ENCODE measurements at regions of chr11 and their contacts with region 1.

Region 1: GRCh38 chr11:66592457-66593302 is at the starts of genes CCDC87 and CCS:
- DNase-seq: peak; percentile 93
- ATAC-seq: peak; percentile 89
- H3K4me3 ChIP-seq: peak within 1 kb of the TSS; percentile 71 to 94 (median 76)
- H3K27ac ChIP-seq: peak within 1 kb of the TSS; percentile 78
- H3K4me1 ChIP-seq: peaks cover 72% of the 10 kb centered on the region
- H3K27me3 ChIP-seq: no peaks in the 10 kb centered on the region; a peak in 1 of 5 replicates
- CTCF ChIP-seq: peak; percentile 85
- EP300 ChIP-seq: no peak
- POLR2A ChIP-seq: peak; percentile 89 to 99
- RAD21 ChIP-seq: peak; percentile 91
- total RNA-seq, gene CCDC87: 0.17 and 0.42 TPM in 2 replicates
- total RNA-seq, gene CCS: 34.2 and 44.6 TPM in 2 replicates

Region 2: DNA sequence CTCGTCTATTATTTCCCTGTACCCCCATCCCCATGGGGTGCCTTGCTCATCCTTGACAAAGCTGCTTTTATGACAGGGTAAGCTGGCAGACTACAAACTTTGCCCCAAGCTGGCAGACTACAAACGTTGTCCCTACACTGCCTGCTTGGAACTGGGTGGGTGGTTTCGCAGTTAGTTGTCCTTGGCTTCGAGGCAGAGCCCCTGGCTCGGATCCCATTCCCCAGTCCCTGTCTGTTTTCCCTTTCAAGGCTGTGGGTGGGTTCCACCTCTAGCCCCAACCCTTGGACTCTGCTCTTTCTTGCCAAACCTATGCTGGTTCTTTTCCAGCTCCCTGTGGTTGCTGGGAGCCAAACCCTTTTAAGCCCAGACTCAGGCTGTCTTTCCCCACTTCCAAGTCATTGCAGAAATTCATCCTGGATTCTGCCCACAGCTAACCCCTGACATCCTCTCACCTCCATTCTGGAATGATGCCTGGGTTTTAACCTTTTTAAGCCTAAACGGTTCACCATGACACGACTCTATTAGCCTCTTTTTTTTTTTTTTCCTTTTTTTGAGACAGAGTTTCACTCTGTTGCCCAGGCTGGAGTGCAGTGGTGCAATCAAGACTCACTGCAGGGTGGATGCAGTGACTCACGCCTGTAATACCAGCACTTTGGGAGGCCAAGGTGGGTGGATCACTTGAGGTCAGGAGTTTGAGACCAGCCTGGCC is 14.6 kb after region 1 on chr11:
- CTCF ChIA-PET with region 1: no interaction called
- POLR2A ChIA-PET with region 1: interaction called, 26 read pairs
- in situ Hi-C with region 1: no loop called
- intact Hi-C with region 1: no loop called
- DNase-seq: peak; percentile 82
- ATAC-seq: peak; percentile 91
- H3K4me3 ChIP-seq: peak overlapping the region in 1 of 3 experiments; percentile 14; a peak in 2 of 6 replicates
- H3K27ac ChIP-seq: peak overlapping the region; percentile 70
- H3K4me1 ChIP-seq: peaks cover 23% of the 10 kb centered on the region
- H3K27me3 ChIP-seq: no peaks in the 10 kb centered on the region
- CTCF ChIP-seq: no peak
- EP300 ChIP-seq: peak in 1 of 2 experiments; percentile 54; a peak in 1 of 4 replicates
- POLR2A ChIP-seq: no peak
- RAD21 ChIP-seq: 0 out of 2 replicates have a peak, but pooled peaks have one; percentile 12

Region 3: DNA sequence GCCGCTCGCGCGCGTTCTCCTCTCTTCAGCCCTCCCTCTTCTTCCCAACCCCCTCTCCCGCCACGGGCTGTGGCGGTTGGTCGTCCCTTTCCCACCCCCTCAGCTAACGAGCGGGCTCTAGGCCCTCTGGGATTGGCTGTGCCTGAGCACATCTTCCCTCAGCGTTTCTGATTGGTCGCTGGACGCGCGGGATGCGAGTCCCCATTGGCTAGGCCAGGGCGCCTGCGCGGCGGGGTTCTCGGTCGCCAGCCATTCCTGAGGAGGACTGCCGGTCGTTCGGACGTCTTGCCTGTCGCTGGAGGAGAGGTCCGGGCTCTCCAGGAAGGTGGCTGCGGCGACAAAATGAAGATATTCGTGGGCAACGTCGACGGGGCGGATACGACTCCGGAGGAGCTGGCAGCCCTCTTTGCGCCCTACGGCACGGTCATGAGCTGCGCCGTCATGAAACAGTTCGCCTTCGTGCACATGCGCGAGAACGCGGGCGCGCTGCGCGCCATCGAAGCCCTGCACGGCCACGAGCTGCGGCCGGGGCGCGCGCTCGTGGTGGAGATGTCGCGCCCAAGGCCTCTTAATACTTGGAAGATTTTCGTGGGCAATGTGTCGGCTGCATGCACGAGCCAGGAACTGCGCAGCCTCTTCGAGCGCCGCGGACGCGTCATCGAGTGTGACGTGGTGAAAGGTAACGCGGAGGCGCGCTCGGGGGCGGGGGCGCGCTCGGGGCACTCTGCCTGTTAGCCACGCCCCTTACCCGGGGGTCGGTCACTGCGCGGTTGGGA is 23.9 kb after region 1 on chr11 and contains the start of gene RBM14:
- CTCF ChIA-PET with region 1: no interaction called
- POLR2A ChIA-PET with region 1: interaction called, 72 read pairs
- in situ Hi-C with region 1: no loop called
- intact Hi-C with region 1: loop called (anchors 2 kb)
- DNase-seq: peak; percentile 99
- ATAC-seq: peak; percentile 96
- H3K4me3 ChIP-seq: peak within 1 kb of the TSS; percentile 89 to 93 (median 92)
- H3K27ac ChIP-seq: peak within 1 kb of the TSS; percentile 89
- H3K4me1 ChIP-seq: peaks cover 44% of the 10 kb centered on the region
- H3K27me3 ChIP-seq: no peaks in the 10 kb centered on the region; a peak in 1 of 5 replicates
- CTCF ChIP-seq: no peak; the same call in none of the 2 replicates
- EP300 ChIP-seq: peak in 1 of 2 experiments; percentile 30; a peak in 1 of 4 replicates
- POLR2A ChIP-seq: peak; percentile 99
- RAD21 ChIP-seq: 0 out of 2 replicates have a peak, but pooled peaks have one; percentile 15
- total RNA-seq, gene RBM14: 41.7 and 44.1 TPM in 2 replicates

Measured in HepG2 (cell line).